ENCODE measurements at regions of chr9 and their contacts with region 1.

Region 1: DNA sequence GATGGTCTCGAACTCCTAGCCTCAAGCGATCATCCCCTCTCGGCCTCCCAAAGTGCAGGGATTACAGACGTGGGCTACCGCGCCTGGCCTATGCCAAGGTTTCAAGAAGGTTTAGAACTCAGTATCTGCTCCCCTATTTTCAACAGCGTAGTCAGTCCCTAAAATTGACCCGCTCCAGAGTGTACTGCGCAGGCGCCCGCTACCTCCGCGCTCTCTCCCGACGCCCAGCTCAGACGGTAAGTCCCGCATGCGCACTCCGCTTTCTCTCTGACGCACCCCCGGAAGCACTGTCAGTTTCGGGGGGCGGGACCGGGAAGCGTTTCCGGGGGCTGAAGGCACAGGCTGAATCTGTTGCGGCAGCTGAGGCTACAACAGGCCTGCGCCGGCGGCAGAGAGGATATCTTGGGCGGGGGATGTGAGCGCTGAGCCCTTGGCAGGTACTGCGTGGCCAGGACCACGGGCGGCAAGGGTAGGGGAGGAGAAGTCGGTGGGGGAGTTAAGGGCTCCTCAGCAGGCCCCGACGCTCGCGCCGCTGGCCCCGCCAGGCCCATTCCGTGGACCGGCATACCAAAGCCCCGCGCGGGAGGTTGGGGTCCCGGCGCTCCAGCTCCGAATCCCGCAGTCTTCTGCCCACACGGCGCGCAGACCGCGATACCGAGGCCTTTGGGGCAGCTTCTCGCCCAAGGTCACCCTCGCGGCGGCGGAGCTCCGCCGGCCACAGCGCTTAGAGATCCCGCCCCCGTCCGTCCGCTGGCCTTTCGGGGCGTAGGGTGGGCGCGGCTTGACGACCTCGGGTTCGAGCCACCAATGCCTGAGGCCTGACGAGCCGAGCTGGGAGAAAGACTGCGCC is at the start of gene ZBTB43:
- DNase-seq: peak; percentile 99
- H3K4me3 Mint-ChIP-seq: peak within 1 kb of the TSS; percentile 84
- H3K27ac Mint-ChIP-seq: peak within 1 kb of the TSS; percentile 97
- H3K4me1 Mint-ChIP-seq: peaks cover 43% of the 10 kb centered on the region
- H3K27me3 Mint-ChIP-seq: no peaks in the 10 kb centered on the region
- total RNA-seq, gene ZBTB43: 40.8 to 41.0 TPM

Region 2: GRCh38 chr9:126673689-126674364 is 131.1 kb before region 1 on chr9:
- CTCF ChIA-PET with region 1: no interaction called
- POLR2A ChIA-PET with region 1: no interaction called
- DNase-seq: no peak
- H3K4me3 Mint-ChIP-seq: no peak overlapping the region
- H3K27ac Mint-ChIP-seq: no peak overlapping the region
- H3K4me1 Mint-ChIP-seq: peaks cover 4% of the 10 kb centered on the region
- H3K27me3 Mint-ChIP-seq: peaks cover 55% of the 10 kb centered on the region

Region 3: GRCh38 chr9:126722252-126723078 is 82.5 kb before region 1 on chr9:
- CTCF ChIA-PET with region 1: no interaction called
- POLR2A ChIA-PET with region 1: interaction called, 21 read pairs
- DNase-seq: peak; percentile 89
- H3K4me3 Mint-ChIP-seq: peak overlapping the region; percentile 89
- H3K27ac Mint-ChIP-seq: peak overlapping the region; percentile 74
- H3K4me1 Mint-ChIP-seq: peaks cover 43% of the 10 kb centered on the region
- H3K27me3 Mint-ChIP-seq: peaks cover 10% of the 10 kb centered on the region

Region 4: DNA sequence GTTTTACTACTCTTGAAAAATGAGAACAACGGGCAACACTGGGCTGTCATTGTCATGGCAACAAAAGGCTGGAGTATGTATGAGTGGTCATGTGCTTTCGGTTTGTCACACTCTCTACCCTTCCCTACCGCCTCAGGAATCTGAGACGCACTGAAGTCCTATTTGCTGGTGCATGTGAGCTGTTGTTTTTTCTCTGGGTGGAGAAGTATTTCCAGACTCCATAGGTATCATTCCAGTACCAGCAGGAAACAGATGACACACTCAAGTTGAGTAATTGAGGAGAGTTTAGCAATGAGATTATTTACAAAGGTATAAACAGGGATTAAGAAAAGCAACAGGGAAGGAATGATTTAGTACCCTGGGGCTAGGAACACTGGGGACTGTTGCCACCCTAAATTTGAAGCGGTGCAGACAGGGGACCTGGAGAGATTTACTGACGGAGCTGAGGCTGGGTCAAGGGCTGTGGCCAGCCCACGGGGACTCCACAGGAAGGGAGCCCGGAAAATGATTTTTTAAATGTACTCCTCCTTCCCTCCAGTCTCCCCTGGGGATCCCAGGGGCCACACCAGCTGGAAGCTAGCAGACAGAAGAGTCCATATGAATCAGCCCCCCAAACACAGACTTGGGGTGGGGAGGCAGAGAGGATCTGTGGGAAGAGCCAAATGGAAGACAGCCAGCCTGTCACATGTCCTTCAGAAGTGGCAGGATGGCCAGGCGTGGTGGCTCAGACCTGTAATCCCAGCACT is 13.3 kb before region 1 on chr9:
- CTCF ChIA-PET with region 1: interaction called, 4 read pairs
- POLR2A ChIA-PET with region 1: interaction called, 28 read pairs
- DNase-seq: no peak
- H3K4me3 Mint-ChIP-seq: no peak overlapping the region
- H3K27ac Mint-ChIP-seq: no peak overlapping the region
- H3K4me1 Mint-ChIP-seq: peaks cover 11% of the 10 kb centered on the region
- H3K27me3 Mint-ChIP-seq: peaks cover 54% of the 10 kb centered on the region

Region 5: DNA sequence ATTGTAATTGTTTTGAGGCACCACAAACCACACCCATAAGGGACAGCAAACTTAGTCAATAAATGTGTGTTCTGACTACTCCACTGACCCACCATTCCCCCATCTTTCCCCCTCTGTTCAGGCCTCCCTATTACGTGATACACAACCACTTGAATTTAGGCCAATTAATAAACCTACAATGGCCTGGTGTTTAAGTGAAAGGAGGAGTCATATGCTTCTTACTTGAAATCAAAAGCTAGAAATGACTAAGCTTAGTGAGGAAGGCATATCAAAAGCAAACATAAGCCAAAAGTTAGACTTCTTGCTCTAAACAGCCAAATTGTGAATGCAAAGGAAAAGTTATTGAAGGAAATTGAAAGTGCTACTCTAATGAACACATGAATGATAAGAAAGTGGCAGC is 14.6 kb after region 1 on chr9:
- CTCF ChIA-PET with region 1: no interaction called
- POLR2A ChIA-PET with region 1: interaction called, 17 read pairs
- DNase-seq: no peak
- H3K4me3 Mint-ChIP-seq: no peak overlapping the region
- H3K27ac Mint-ChIP-seq: no peak overlapping the region
- H3K4me1 Mint-ChIP-seq: peaks cover 19% of the 10 kb centered on the region
- H3K27me3 Mint-ChIP-seq: no peaks in the 10 kb centered on the region

Region 6: GRCh38 chr9:126830827-126831226 is 25.9 kb after region 1 on chr9:
- CTCF ChIA-PET with region 1: interaction called, 7 read pairs
- POLR2A ChIA-PET with region 1: interaction called, 20 read pairs
- DNase-seq: no peak
- H3K4me3 Mint-ChIP-seq: no peak overlapping the region
- H3K27ac Mint-ChIP-seq: peak overlapping the region; percentile 0
- H3K4me1 Mint-ChIP-seq: peaks cover 27% of the 10 kb centered on the region
- H3K27me3 Mint-ChIP-seq: no peaks in the 10 kb centered on the region